HEK293 (cell line): ENCODE measurements at regions of chr11 and their contacts with region 1.

Region 1: DNA sequence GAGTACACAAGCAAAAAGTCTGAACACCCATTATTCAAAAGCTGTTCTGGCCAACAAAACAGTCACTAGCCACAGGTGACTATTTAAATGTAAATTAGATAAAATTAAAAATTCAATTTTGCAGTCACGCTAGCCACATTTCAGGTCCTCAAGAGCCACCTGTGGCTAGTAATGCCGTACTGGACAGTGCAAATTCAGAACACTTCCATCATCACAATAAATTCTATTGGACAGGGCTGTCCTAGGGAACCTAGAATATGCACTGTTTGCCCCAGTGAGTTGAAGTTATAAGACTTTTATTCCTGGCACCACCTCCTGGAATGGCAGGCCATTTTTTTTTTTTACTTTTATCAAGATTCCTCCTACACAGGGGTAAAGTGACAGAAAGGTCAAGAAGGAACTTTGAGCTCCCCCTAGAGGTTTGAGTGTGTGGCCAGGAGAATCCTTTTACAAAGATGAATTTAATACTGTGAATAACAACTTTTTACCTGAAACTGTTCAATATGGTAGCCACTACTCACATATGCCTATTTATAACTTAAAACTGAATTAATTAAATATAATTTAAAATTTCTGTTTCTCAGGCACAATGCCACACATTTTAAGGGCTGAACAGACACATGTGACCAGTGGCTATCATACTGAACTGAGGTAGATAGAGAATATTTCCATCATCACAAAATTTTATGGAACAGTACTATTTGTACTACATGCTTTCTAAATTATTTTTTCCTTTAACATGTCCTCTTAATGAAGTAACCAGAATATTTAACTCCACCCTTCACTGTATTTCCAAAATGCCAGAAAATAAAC is 6.5 kb downstream of the MSANTD2 start:
- H3K4me3 ChIP-seq: no peak overlapping the region
- H3K27ac ChIP-seq: no peak overlapping the region
- H3K4me1 ChIP-seq: peaks cover 8% of the 10 kb centered on the region
- CTCF ChIP-seq: no peak

Region 2: DNA sequence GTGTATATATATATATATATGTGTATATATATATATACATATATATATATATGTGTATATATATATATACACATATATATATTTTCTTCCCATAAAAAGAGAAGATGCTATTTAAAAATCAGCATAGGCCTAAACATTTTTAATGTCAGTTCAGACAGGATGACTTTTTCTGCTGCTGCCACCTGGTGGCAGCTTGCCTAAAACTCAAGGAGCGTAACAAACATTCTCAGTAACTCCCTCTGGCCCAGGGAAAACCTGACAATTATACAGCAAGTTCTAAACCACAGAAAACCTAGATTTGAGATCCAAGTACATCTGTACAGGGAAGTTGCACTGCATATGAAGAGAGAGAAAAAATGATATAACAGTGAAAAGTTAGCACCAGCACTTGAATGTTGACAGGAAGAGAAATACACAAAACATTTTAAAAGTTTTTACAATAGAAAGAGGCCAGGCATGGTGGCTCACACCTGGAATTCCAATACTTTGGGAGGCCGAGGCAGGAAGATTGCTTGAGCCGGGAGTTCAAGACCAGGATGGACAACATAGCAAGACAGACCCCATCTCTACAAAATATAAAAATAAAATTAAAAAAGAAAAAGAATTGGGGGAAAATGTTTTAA is 207.3 kb before region 1 on chr11:
- CTCF ChIA-PET with region 1: no interaction called
- POLR2A ChIA-PET with region 1: no interaction called
- H3K4me3 ChIP-seq: no peak overlapping the region
- H3K27ac ChIP-seq: no peak overlapping the region
- H3K4me1 ChIP-seq: no peaks in the 10 kb centered on the region
- CTCF ChIP-seq: no peak

Region 3: DNA sequence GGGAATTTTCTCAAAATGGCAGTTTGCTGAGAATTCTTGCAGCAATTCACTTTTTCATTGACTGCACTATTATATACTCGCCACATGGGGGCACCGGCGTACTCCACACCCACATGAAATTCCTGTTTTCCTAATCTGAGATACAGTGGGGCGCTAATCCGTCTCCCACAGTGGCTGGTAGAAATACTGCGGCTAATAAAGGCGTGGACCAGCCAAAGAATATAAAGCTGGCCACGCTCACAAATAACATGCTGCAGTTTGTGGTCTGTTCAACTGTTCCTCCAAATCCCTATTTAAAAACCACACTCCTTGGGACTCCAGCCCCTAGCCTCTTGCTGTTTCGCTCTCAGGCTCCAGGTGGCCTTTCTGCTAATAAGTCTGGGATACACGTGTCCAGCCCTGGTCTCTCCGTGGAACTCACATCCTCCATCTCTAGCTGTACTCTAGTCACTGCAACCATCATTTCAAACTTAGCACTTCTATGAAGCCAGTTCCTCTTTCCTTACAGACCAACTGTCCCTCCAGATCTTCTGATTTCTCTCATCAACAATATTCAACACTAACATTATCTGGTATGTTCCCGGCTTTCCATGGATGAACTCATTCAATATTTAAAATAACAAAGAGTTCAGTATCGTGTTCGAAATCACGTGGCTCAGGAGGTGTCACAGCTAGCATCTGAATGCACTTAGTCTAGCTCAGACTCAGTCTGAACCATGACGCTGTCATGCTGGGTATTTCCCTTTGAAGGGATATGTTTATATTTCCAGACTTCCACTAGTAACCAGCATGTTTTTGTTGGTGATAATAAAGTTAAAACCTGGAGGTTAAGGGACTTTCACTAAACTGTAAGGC is 149.0 kb before region 1 on chr11:
- CTCF ChIA-PET with region 1: interaction called, 13 read pairs
- POLR2A ChIA-PET with region 1: no interaction called
- H3K4me3 ChIP-seq: no peak overlapping the region
- H3K27ac ChIP-seq: no peak overlapping the region
- H3K4me1 ChIP-seq: no peaks in the 10 kb centered on the region
- CTCF ChIP-seq: peak; percentile 72; the same call in 1 of the 2 replicates

Region 4: GRCh38 chr11:124769801-124770639 is 23.7 kb before region 1 on chr11:
- CTCF ChIA-PET with region 1: interaction called, 42 read pairs
- POLR2A ChIA-PET with region 1: interaction called, 4 read pairs
- H3K4me3 ChIP-seq: no peak overlapping the region
- H3K27ac ChIP-seq: no peak overlapping the region
- H3K4me1 ChIP-seq: no peaks in the 10 kb centered on the region
- CTCF ChIP-seq: no peak

Region 5: GRCh38 chr11:124829986-124830385 is 36.3 kb after region 1 on chr11:
- CTCF ChIA-PET with region 1: interaction called, 16 read pairs
- POLR2A ChIA-PET with region 1: no interaction called
- H3K4me3 ChIP-seq: no peak overlapping the region
- H3K27ac ChIP-seq: no peak overlapping the region
- H3K4me1 ChIP-seq: no peaks in the 10 kb centered on the region
- CTCF ChIP-seq: no peak

Region 6: GRCh38 chr11:124865921-124866583 is 72.4 kb after region 1 on chr11:
- CTCF ChIA-PET with region 1: interaction called, 10 read pairs
- POLR2A ChIA-PET with region 1: no interaction called
- H3K4me3 ChIP-seq: peak overlapping the region; percentile 13
- H3K27ac ChIP-seq: no peak overlapping the region
- H3K4me1 ChIP-seq: no peaks in the 10 kb centered on the region
- CTCF ChIP-seq: peak; percentile 66; the same call in 1 of the 2 replicates

Region 7: GRCh38 chr11:124920870-124921609 is 127.4 kb after region 1 on chr11:
- CTCF ChIA-PET with region 1: no interaction called
- POLR2A ChIA-PET with region 1: no interaction called
- H3K4me3 ChIP-seq: peak overlapping the region; percentile 27
- H3K27ac ChIP-seq: peak overlapping the region; percentile 64; the same call in 1 of the 2 replicates
- H3K4me1 ChIP-seq: no peaks in the 10 kb centered on the region
- CTCF ChIP-seq: no peak

Region 8: DNA sequence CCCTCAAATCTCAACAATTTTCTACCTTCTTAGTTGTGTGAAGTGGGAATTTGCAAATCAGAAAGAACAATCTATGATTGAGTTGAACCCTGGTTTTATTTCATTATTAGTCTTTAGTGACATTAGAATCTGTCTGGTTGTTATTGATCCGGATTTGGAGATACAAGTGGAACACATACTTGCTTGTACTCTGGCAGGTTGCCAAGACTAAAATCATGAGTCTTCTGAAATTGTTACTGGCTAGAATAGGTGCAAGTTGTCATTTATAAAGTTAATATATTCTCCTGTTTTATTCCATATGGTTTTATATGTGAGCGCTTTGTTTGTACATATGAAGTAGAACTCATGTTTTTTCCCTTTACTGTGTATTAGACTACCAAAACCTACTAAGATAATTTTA is 183.3 kb after region 1 on chr11:
- CTCF ChIA-PET with region 1: no interaction called
- POLR2A ChIA-PET with region 1: no interaction called
- H3K4me3 ChIP-seq: no peak overlapping the region
- H3K27ac ChIP-seq: no peak overlapping the region
- H3K4me1 ChIP-seq: no peaks in the 10 kb centered on the region
- CTCF ChIP-seq: no peak

Region 9: DNA sequence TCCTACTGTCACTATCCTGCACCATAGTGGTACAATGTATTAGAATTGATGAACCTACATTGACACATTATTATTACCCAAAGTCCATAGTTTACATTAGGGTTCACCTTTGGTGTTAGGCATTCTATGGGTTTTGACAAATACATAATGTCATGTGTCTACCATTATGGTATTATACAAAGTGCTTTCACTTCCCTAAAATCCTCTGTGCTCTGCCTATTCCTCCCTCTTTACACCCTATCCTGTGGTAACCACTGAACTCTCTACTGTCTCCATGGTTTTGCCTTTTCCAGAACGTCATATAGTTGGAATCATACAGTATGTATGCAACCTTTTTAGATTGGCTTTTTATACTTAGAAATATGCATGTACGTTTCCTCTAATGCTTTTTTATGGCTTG is 211.8 kb after region 1 on chr11:
- CTCF ChIA-PET with region 1: no interaction called
- POLR2A ChIA-PET with region 1: no interaction called
- H3K4me3 ChIP-seq: no peak overlapping the region
- H3K27ac ChIP-seq: no peak overlapping the region
- H3K4me1 ChIP-seq: no peaks in the 10 kb centered on the region
- CTCF ChIP-seq: no peak